ENCODE measurements at regions of chr12 and their contacts with region 1.

Region 1: GRCh38 chr12:111599459-111600204 is 517 bp upstream of the ATXN2 start:
- DNase-seq: peak; percentile 92 to 93
- ATAC-seq: peak; percentile 84 to 92 (median 91)
- H3K4me3 ChIP-seq: peak overlapping the region; percentile 78 to 97 (median 92)
- H3K27ac ChIP-seq: peak overlapping the region; percentile 93 to 100 (median 99)
- H3K4me1 ChIP-seq: peaks cover 4 to 37% (median 32%) of the 10 kb centered on the region in 9 donors
- H3K27me3 ChIP-seq: no peaks in the 10 kb centered on the region
- CTCF ChIP-seq: no peak

Region 2: GRCh38 chr12:111557271-111558106 is 42.1 kb before region 1 on chr12:
- intact Hi-C with region 1: loop called in 1 of 10 experiments (anchors 5 kb)
- DNase-seq: no peak
- ATAC-seq: no peak
- H3K4me3 ChIP-seq: no peak overlapping the region
- H3K27ac ChIP-seq: no peak overlapping the region
- H3K4me1 ChIP-seq: peaks cover 0 to 56% (median 20%) of the 10 kb centered on the region in 9 donors
- H3K27me3 ChIP-seq: no peaks in the 10 kb centered on the region
- CTCF ChIP-seq: no peak

Region 3: DNA sequence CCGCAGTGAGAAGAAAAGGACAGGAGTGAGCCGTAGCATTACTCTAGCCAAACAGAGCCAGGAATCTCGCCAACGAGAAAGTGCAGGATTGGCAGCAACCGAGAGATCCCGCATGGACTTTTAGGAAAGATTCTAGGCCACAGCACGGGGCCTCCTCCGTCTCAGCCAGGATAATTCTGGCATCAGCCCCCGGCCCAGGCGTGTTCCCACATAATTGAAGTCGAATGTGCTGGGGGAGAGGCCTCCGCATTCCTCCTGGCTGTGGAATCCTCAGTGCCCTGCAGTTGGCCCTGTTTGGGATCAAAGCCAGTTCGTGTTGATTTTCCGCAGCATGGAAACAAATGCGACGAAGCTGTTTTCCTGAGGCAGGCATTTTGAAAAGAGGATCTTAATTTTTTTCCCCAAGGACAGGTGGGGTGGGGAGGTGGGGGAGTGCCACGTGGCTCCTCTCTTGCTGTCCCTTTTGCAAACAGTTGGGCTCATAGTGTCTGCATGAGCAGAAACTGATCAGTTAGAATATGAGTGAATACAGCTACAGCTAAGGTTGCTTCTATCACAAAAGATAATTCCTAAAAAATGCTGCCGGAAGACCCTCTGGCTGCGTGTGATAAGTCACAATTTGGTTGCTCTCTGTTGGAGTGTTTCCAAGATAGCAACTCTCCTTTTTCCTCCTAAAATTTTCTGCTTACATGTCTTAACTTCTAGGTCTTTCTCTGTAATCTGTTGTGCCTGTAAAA is 36.7 kb after region 1 on chr12:
- intact Hi-C with region 1: loop called in 3 of 10 experiments (anchors 5 kb)
- DNase-seq: peak; percentile 47 to 54
- ATAC-seq: peak; percentile 72 to 87 (median 78)
- H3K4me3 ChIP-seq: peak overlapping the region in 2 of 10 donors; percentile 0 to 7
- H3K27ac ChIP-seq: peak overlapping the region; percentile 15 to 84 (median 65)
- H3K4me1 ChIP-seq: peaks cover 7 to 23% (median 18%) of the 10 kb centered on the region in 9 donors
- H3K27me3 ChIP-seq: no peaks in the 10 kb centered on the region
- CTCF ChIP-seq: no peak

Region 4: GRCh38 chr12:111653596-111653995 is 54.0 kb after region 1 on chr12:
- intact Hi-C with region 1: no loop called
- DNase-seq: no peak
- ATAC-seq: no peak
- H3K4me3 ChIP-seq: no peak overlapping the region
- H3K27ac ChIP-seq: no peak overlapping the region
- H3K4me1 ChIP-seq: no peaks in the 10 kb centered on the region
- H3K27me3 ChIP-seq: no peaks in the 10 kb centered on the region
- CTCF ChIP-seq: no peak